Activated B cell treated with CpG ODN at 0.5 μM for 24 hours (primary cell): ENCODE measurements at regions of chr20 and their contacts with region 1.

Region 1: GRCh38 chr20:58870239-58871014 is 17.9 kb downstream of the GNAS start:
- DNase-seq: peak; percentile 37
- ATAC-seq: peak; percentile 84
- H3K4me3 Mint-ChIP-seq: no peak overlapping the region
- H3K27ac Mint-ChIP-seq: peak overlapping the region; percentile 41
- H3K4me1 Mint-ChIP-seq: peaks cover 11% of the 10 kb centered on the region
- H3K27me3 Mint-ChIP-seq: no peaks in the 10 kb centered on the region
- CTCF ChIP-seq: peak; percentile 83

Region 2: DNA sequence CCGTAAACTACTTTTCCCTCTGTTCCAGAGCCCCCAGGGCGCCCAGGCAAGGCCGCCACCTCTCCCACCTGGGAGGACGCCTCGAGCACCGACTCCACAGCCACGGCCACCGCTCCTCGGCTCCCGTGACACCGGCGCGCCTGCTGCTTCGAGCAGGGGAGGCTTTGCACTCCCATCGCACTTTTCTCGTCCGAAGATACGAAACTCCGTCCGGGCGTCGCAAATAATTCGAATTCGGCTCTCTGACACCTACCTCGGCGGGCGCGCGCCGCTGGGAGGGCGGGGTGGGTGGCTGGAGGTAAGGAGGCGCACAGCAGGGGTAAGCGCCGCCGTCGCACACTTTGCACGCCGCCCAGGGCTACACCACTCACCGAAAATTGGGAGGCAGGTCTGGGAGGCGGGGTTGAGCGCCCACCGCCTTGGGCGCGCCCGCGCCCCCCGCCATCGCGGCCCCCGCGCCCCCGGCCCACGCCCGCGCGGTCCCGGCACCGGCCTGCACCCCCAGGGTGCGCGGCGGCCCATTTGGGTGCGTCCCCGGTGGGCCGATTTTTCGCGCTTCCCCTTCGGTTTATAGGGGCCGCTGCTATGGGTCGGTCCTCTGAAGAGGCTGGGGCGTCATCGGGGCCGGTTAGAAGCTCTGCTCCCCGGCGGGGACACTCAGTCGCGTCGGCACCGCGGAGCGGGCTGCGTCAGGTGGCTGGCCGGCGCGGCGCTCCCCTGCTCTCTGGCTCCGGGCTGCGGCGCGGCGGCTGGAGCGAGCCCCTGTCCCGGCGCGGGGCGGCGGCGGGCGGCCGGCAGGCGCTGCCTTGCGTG is 18.3 kb after region 1 on chr20:
- CTCF ChIA-PET with region 1: interaction called, 3 read pairs
- POLR2A ChIA-PET with region 1: no interaction called
- intact Hi-C with region 1: loop called (anchors 1 kb)
- DNase-seq: peak; percentile 73
- ATAC-seq: peak; percentile 45
- H3K4me3 Mint-ChIP-seq: peak overlapping the region; percentile 84
- H3K27ac Mint-ChIP-seq: peak overlapping the region; percentile 59
- H3K4me1 Mint-ChIP-seq: peaks cover 27% of the 10 kb centered on the region
- H3K27me3 Mint-ChIP-seq: no peaks in the 10 kb centered on the region
- CTCF ChIP-seq: no peak

Region 3: DNA sequence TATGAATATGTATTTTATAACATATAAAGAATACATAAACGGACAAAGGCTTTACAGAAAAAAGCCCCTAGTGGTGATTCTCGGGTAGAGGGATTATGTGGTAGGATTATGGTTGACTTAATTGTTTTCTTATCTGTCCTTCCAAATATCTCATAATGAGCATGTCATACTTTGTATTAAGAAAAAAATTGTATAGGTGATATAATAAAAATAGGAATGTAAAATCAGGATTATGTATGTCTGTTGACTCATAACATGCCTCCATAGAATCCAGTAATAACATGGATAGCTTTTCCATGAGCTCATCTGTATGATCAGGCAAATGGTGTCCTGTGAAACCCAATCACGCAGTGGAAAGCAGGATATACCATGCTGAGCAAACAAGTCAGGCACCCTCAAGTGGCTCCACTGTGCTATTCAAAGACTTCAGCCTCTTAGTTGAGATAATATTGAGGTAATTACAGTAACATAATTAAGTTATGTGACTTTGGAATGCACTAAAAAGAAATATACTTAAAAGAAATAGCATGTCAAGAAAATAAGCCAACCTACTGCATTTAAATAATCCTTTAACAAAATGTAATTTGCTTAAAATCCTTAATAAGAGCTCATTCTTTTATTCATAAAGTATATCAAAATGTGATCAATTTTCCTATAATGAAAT is 211.8 kb after region 1 on chr20:
- CTCF ChIA-PET with region 1: interaction called, 15 read pairs
- POLR2A ChIA-PET with region 1: no interaction called
- intact Hi-C with region 1: loop called (anchors 1 kb)
- DNase-seq: no peak
- ATAC-seq: no peak
- H3K4me3 Mint-ChIP-seq: no peak overlapping the region
- H3K27ac Mint-ChIP-seq: no peak overlapping the region
- H3K4me1 Mint-ChIP-seq: peaks cover 11% of the 10 kb centered on the region
- H3K27me3 Mint-ChIP-seq: peaks cover 25% of the 10 kb centered on the region
- CTCF ChIP-seq: no peak

Region 4: GRCh38 chr20:59087829-59088433 is 217.5 kb after region 1 on chr20:
- CTCF ChIA-PET with region 1: interaction called, 15 read pairs
- POLR2A ChIA-PET with region 1: no interaction called
- intact Hi-C with region 1: loop called (anchors 1 kb)
- DNase-seq: peak; percentile 70
- ATAC-seq: peak; percentile 82
- H3K4me3 Mint-ChIP-seq: no peak overlapping the region
- H3K27ac Mint-ChIP-seq: peak overlapping the region; percentile 5
- H3K4me1 Mint-ChIP-seq: peaks cover 12% of the 10 kb centered on the region
- H3K27me3 Mint-ChIP-seq: peaks cover 14% of the 10 kb centered on the region
- CTCF ChIP-seq: peak; percentile 55

Region 5: DNA sequence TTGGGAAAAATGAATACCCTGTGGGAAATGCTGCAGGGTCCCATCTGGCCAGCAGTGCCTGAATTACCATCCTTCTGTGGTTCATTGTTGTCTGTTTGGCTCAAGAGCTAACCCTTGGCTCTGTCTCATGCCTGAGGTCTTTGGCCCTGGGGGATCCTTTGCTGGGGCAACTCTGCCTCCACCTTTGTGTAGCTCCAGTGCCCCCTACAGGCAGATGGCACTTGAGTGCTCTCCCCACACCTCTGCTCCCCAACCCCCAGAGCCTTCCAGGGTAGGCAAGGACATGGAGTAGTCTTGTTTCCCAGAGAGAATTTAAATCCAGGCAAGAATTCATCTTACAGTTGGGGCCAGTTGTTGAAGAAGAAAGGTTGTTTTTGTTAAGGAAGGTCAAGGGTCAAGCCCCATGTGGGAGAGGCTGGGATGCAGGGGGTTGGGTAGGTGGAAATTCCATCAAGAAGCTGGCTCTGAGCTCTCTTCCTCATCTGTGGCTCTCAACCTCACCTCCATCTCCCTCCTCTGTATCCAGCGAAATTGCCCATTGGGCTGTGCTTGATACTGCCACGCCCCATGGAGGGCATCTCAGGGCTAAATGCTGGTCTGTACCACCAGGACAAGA is 337.4 kb after region 1 on chr20:
- CTCF ChIA-PET with region 1: interaction called, 43 read pairs
- POLR2A ChIA-PET with region 1: no interaction called
- intact Hi-C with region 1: loop called (anchors 1 kb)
- DNase-seq: peak; percentile 59
- ATAC-seq: peak; percentile 100
- H3K4me3 Mint-ChIP-seq: no peak overlapping the region
- H3K27ac Mint-ChIP-seq: peak overlapping the region; percentile 30
- H3K4me1 Mint-ChIP-seq: peaks cover 6% of the 10 kb centered on the region
- H3K27me3 Mint-ChIP-seq: no peaks in the 10 kb centered on the region
- CTCF ChIP-seq: no peak

Region 6: DNA sequence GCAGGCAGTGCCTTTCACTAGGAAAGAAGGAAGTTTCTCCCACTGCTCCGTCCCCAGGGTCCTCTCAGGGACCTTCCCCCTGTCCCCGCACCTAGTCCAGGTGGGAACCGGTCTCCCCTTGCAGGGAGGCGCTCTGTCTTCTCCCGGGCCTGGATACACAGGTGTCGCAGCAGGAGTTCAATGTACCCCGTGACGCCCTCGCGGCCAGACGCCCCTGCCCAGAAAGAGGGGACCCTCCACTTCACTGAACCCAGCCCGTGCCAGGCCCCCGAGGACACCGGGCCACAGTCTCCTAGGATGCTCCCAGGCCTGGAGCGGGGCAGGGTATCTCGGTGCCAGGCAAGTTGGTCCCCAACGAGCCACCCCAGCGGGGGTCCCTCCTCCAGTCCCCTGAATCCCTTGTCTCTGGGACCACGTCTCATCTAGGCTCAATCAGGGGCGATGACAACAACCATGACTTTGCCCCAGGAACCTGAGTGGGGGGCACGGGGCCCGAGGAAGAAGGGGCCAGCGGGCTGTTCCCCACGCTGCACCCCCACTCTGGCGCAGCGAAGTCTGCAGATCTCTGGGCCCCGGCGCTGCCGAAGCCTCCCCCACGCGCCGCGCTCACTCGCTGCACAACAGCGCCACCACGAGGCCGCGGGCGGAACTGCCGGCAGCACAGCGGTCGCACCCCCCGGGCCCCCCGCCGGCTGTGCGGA is 533.0 kb after region 1 on chr20:
- CTCF ChIA-PET with region 1: no interaction called
- POLR2A ChIA-PET with region 1: no interaction called
- intact Hi-C with region 1: loop called (anchors 2 kb)
- DNase-seq: peak; percentile 52
- ATAC-seq: peak; percentile 57
- H3K4me3 Mint-ChIP-seq: no peak overlapping the region
- H3K27ac Mint-ChIP-seq: no peak overlapping the region
- H3K4me1 Mint-ChIP-seq: peaks cover 4% of the 10 kb centered on the region
- H3K27me3 Mint-ChIP-seq: peaks cover 30% of the 10 kb centered on the region
- CTCF ChIP-seq: peak; percentile 47